Activated CD4-positive, alpha-beta memory T cell treated with anti-CD3 and anti-CD28 coated beads, Interleukin-2, amount 10 ng/mL, durations not matched to agents 7 days and 5 days (primary cell): ENCODE measurements at regions of chr3 and their contacts with region 1.

Region 1: GRCh38 chr3:111978493-111979433 is at the start of gene ABHD10:
- DNase-seq: peak; percentile 97
- H3K4me3 Mint-ChIP-seq: peak within 1 kb of the TSS; percentile 75
- H3K27ac Mint-ChIP-seq: peak within 1 kb of the TSS; percentile 92
- H3K4me1 Mint-ChIP-seq: peaks cover 42% of the 10 kb centered on the region
- H3K27me3 Mint-ChIP-seq: no peaks in the 10 kb centered on the region
- total RNA-seq, gene ABHD10: 40.4 to 44.7 TPM

Region 2: DNA sequence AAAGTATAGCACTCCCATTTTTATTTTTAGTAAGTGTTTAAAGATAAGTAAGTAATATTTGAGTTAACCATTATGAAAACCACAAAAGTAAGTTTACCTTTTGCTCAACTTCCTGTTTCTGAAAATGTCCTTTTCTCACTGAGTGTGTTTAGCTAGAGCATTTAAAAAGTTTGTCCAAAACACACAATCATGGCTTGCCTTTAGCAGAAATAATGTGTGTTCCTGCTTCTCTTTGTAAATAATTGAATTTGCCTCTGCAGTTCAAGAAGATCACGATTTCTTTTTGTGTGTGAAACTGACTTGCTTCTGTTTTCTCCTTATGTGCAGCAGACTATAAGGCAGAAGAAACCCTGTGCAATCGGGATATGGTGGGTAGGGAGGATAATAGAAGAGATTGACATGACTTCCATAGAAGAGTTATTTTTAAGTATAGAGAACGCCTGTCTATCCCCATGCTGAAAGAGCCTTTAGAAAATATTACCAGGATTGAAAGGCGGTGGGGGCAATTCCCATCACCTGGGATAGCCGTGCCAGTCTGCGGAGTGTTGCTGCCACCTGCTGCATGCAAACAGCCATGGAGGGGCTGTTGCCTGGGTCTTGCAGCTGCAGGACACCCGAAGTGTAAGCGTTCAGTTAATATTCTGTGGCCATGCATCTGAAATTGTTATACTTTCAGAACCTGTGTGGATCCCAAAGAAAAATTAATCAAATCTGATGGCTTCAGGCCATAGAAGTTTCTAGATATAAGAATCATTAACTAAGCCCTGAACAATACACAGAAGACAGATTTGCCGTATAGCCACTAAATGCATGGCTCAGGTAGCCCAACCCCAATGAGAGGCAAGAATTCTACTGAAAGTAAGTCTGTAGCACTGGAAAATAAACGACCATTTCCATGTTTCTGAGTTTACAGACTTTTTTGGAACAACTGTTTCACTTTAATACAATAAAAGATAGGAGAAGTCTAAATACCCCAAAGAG is 439.1 kb before region 1 on chr3:
- CTCF ChIA-PET with region 1: no interaction called
- POLR2A ChIA-PET with region 1: interaction called, 13 read pairs
- DNase-seq: peak; percentile 74
- H3K4me3 Mint-ChIP-seq: peak overlapping the region; percentile 70
- H3K27ac Mint-ChIP-seq: peak overlapping the region; percentile 82
- H3K4me1 Mint-ChIP-seq: peaks cover 53% of the 10 kb centered on the region
- H3K27me3 Mint-ChIP-seq: no peaks in the 10 kb centered on the region

Region 3: DNA sequence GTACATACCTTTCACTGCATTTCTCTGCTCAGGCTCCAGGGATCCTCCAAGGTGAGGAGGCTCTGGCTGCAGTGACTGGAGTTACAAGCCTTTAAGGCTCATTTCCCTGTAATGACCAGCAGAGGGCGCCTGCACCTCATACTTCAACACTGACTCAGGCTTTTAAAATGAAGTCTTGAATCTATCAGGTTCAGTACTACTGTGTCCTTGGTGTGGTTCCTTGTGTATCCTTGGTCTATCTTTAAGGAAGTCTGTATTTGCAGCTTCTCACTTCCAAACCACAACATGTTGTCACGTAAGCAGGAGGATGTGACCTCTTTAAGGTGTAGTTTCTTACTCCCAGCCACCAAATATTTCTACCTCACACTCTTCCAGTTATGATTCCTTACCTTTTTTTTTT is 261.2 kb before region 1 on chr3:
- CTCF ChIA-PET with region 1: interaction called, 14 read pairs
- POLR2A ChIA-PET with region 1: interaction called, 5 read pairs
- DNase-seq: peak; percentile 74
- H3K4me3 Mint-ChIP-seq: no peak overlapping the region
- H3K27ac Mint-ChIP-seq: peak overlapping the region; percentile 1
- H3K4me1 Mint-ChIP-seq: peaks cover 3% of the 10 kb centered on the region
- H3K27me3 Mint-ChIP-seq: no peaks in the 10 kb centered on the region

Region 4: DNA sequence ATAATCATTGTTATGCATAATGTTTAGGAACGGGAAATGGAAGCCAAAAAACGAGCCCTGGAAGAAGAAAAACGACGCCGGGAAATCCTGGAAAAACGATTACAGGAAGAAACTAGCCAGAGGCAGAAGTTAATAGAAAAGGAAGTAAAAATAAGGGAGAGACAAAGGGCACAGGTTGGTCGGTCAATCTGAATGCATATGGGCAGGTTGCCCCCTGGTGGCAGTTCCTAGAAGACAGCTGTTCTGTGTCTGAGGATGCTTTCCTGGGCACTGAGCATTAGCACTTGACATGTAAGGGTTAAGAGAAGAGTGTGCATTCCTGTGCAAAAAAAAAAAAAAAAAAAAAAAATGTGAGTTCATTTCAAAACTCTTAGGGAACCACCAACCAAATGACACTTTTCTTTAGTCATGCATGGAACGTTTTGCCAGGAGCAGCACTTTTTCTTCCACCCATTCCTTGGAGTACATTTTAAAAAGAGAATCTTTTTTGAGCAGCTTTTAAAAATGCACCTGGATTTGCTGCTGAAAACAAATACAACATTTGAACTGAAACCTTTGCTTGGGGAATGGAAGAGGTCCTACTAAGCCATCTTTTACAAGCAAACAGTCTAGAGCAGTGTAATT is 11.0 kb before region 1 on chr3:
- CTCF ChIA-PET with region 1: interaction called, 50 read pairs
- POLR2A ChIA-PET with region 1: interaction called, 17 read pairs
- DNase-seq: peak; percentile 82
- H3K4me3 Mint-ChIP-seq: no peak overlapping the region
- H3K27ac Mint-ChIP-seq: no peak overlapping the region
- H3K4me1 Mint-ChIP-seq: peaks cover 12% of the 10 kb centered on the region
- H3K27me3 Mint-ChIP-seq: no peaks in the 10 kb centered on the region

Region 5: GRCh38 chr3:111998636-111999483 is 20.1 kb after region 1 on chr3 and contains the start of gene TAGLN3:
- CTCF ChIA-PET with region 1: interaction called, 5 read pairs
- POLR2A ChIA-PET with region 1: interaction called, 20 read pairs
- DNase-seq: no peak
- H3K4me3 Mint-ChIP-seq: peak within 1 kb of the TSS; percentile 39
- H3K27ac Mint-ChIP-seq: no peak within 1 kb of the TSS
- H3K4me1 Mint-ChIP-seq: peaks cover 19% of the 10 kb centered on the region
- H3K27me3 Mint-ChIP-seq: no peaks in the 10 kb centered on the region
- total RNA-seq, gene TAGLN3: 0.18 TPM in 1 of 2 experiments, not detected in the other